OCI-LY7 (cell line): ENCODE measurements at regions of chr1 and their contacts with region 1.

Region 1: GRCh38 chr1:24536391-24536840 is 19.5 kb upstream of the NCMAP start:
- DNase-seq: peak; percentile 87
- H3K4me3 ChIP-seq: peak overlapping the region; percentile 65
- H3K27ac ChIP-seq: peak overlapping the region; percentile 89
- H3K4me1 ChIP-seq: peaks cover 82% of the 10 kb centered on the region
- CTCF ChIP-seq: no peak

Region 2: DNA sequence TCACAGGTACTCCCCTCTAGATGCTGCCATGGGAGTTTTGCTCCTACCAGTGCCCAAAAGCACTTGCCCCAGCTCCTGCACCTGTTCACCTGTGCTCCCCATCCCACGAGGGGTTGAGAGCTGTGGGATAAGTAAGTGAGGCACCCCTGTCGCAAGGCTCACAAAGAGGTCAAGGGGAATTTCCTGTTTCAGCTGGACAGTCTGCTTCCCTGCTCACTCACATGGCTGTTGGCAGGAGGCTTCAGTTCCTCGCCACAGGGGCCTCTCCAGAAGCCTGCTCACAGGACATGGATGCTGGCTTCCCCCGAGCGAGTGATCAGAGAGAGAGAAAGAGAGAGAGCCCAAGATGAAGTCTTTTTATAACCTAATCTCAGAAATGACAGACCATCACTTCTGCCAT is 10.8 kb after region 1 on chr1:
- CTCF ChIA-PET with region 1: no interaction called
- POLR2A ChIA-PET with region 1: interaction called, 16 read pairs
- intact Hi-C with region 1: no loop called
- DNase-seq: no peak
- H3K4me3 ChIP-seq: peak overlapping the region; percentile 5
- H3K27ac ChIP-seq: peak overlapping the region; percentile 58
- H3K4me1 ChIP-seq: peaks cover 69% of the 10 kb centered on the region
- CTCF ChIP-seq: no peak

Region 3: DNA sequence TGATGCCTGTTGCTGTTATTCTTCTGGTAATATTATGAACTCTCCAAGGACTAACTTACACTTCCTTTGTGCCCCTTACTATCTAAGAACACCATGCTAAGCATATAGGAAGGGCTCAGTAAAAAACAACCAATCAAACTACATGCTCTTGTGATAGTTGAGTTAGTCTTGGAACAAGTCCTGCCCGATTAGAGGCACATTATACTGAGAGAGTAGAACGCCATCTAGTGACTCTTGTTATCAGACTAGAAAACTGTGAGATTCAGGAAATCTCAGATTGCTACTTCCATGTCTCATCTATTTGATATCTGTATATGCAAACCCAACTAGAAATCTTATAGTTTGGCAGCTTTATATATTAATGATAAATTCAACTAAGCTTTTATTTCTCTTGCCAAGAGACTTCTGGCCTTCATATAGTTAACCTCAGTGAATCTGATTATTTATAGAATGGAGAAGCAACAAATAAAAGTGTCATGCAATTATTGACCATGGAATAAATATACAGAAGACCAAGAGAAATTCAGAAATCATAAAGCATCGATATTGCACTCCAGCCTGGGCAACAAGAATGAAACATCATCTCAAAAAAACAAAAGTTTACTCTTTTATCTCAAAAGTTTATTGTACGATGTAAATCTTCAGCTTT is 98.9 kb after region 1 on chr1:
- CTCF ChIA-PET with region 1: no interaction called
- POLR2A ChIA-PET with region 1: interaction called, 5 read pairs
- intact Hi-C with region 1: loop called (anchors 2 kb)
- DNase-seq: peak; percentile 86
- H3K4me3 ChIP-seq: no peak overlapping the region
- H3K27ac ChIP-seq: no peak overlapping the region
- H3K4me1 ChIP-seq: peaks cover 4% of the 10 kb centered on the region
- CTCF ChIP-seq: peak; percentile 97